ENCODE measurements at regions of chr10 and their contacts with region 1.

Region 1: DNA sequence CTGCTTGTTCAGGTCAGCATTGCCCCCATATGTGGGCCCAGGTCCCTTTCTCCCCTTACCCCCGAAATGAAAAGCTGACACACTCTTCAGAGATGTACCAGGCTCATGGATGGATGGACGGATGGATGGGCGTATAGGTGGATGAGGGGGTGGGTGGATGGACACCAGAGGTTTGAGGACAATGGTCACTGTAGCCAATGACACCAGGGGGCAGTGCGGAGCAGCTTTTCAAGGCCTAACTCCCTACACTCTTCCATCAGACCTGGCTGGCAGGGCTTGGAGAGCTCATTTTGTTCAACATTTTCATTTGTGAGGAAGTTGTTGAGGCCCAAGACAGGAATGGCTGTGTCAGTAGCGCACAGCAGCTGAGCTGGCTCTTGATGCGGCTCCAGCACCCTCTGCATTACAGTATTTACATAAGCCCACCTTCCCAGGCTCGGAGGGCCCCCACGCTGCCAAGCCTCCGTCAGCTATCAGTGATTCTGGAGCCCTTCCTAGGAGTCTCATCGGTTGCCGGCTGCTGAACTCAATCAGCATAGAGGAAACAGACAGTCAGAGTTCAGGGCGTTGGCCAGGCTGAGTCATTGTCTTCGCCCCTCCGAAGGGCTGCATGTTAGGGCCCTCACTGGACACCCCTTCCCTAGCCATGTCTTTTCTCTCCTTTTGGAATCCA is 11.6 kb upstream of the FFAR4 start:
- DNase-seq: peak in 8 of 10 donors; percentile 33 to 69 (median 64)
- H3K4me3 ChIP-seq: no peak overlapping the region
- H3K27ac ChIP-seq: no peak overlapping the region
- H3K27me3 ChIP-seq: no peaks in the 10 kb centered on the region
- CTCF ChIP-seq: peak in 55 of 56 donors; percentile 29 to 75 (median 60)

Region 2: GRCh38 chr10:93680412-93681047 is 125.6 kb after region 1 on chr10:
- intact Hi-C with region 1: loop called in 1 of 2 experiments (anchors 5 kb)
- DNase-seq: no peak
- H3K4me3 ChIP-seq: no peak overlapping the region
- H3K27ac ChIP-seq: no peak overlapping the region
- H3K27me3 ChIP-seq: no peaks in the 10 kb centered on the region
- CTCF ChIP-seq: peak in 53 of 56 donors; percentile 28 to 71 (median 51)

Measured in dorsolateral prefrontal cortex (tissue), 120 donors.